Aorta (tissue), 5 donors: ENCODE measurements at regions of chr17 and their contacts with region 1.

Region 1: DNA sequence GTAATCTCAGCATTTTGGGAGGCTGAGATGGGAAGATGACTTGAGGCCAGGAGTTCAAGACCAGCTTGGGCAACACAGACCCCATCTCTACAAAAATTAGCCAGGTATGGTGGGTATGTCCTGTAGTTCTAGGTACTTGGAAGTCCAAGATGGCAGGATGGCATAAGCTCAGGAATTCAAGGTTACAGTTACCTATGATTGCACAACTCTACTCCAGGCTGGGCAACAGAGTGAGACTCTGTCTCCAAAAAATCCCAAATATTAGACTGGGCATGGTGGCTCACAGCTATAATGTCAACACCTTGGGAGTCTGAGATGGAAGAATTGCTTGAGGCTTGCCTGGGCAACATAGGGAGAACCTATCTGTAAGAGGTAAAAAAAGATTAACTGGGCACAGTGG is 63.4 kb downstream of the CRLF3 start:
- DNase-seq: no peak
- ATAC-seq: no peak
- H3K4me3 ChIP-seq: no peak overlapping the region
- H3K27ac ChIP-seq: no peak overlapping the region
- H3K4me1 ChIP-seq: no peaks in the 10 kb centered on the region
- H3K27me3 ChIP-seq: no peaks in the 10 kb centered on the region

Region 2: DNA sequence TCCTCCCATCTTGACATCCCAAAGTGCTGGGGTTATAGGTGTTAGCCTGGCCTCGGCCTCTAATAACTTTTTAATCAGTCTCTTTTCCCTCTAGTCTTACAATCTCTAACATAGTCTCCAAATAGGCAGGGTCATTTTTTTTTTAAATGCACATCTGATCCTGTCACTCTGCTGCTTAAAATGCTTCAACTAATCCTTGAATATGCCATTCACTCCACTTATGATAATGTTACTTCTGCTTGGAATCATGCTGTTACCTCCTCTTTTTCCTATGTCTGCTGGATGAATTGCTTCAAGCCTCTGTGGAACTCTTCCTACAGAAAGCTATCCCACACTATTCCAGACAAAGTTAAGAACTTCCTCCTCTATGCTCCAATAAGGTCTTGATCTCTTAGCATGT is 40.6 kb after region 1 on chr17:
- intact Hi-C with region 1: loop called in 1 of 2 experiments (anchors 5 kb)
- DNase-seq: no peak
- ATAC-seq: no peak
- H3K4me3 ChIP-seq: no peak overlapping the region
- H3K27ac ChIP-seq: no peak overlapping the region
- H3K4me1 ChIP-seq: no peaks in the 10 kb centered on the region
- H3K27me3 ChIP-seq: no peaks in the 10 kb centered on the region